Caco-2 (cell line): ENCODE measurements at regions of chr17 and their contacts with region 1.

Region 1: DNA sequence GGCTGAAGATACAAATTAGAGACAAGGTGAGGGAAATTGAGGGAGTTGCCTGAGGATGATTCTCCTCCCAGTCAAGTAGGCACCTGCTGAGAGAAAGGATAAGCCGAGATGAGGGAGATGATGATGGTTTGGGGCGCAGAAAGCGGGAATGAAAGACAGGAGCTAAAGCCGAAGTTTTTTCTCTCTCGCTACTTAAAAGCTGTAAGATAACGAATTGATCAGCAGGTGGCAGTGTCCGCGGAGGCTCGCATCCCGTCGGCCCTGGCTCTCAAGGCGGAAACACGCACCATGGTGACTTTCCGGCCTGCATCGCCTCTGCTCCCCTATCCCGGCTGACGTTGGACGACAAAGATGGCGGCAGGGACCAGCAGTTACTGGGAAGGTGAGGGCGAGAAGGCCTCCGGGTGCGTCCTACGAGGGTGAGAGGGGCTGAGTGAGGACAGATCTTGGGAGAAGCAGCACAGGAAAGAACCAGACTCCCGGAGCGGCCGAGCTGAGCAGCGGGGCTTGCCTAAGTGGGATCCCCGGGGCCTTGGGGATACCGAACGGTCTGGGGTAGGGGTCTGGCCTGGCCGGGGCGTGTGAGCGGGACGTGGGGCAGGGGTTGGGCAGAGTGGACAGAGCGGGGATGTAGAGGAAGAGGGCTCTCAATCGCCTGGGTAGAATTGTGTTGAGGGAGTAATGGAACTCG is at the start of gene GOSR1:
- DNase-seq: peak; percentile 94 to 95
- H3K4me3 ChIP-seq: peak within 1 kb of the TSS; percentile 96
- H3K4me3 Mint-ChIP-seq: peak within 1 kb of the TSS; percentile 91
- H3K27ac Mint-ChIP-seq: peak within 1 kb of the TSS; percentile 97
- H3K4me1 ChIP-seq: no peaks in the 10 kb centered on the region; the same call in 1 of the 2 replicates
- H3K4me1 Mint-ChIP-seq: peaks cover 13% of the 10 kb centered on the region
- H3K27me3 ChIP-seq: no peaks in the 10 kb centered on the region
- H3K27me3 Mint-ChIP-seq: no peaks in the 10 kb centered on the region
- CTCF ChIP-seq: peak; percentile 71 to 85
- total RNA-seq, gene GOSR1: 78.3 and 86.5 TPM in 2 replicates

Region 2: DNA sequence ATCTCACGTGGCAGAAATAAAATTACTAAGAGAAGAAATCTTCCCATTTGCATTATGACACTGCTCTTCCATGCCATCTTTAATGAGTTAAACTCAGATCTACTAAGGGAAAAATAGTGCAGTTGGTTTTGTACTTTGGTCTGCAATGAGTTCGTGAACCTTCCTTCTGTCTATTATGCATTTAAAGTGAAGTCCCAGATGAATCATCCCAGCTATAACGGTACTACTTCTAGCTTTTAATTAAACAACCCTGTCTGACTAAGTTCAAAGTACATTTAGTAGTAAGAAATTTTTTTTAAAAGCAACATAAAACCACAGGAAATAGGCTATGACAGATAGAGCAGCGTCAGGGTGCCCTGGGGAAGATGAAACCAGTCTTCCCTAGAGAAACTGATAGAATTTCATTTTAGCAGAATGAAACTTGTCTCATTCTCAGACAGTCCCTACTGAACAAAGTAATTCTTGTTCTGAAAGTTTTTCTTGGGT is 145.1 kb before region 1 on chr17:
- CTCF ChIA-PET with region 1: no interaction called
- POLR2A ChIA-PET with region 1: no interaction called
- intact Hi-C with region 1: no loop called
- DNase-seq: no peak
- H3K4me3 ChIP-seq: no peak overlapping the region
- H3K4me3 Mint-ChIP-seq: no peak overlapping the region
- H3K27ac Mint-ChIP-seq: no peak overlapping the region
- H3K4me1 ChIP-seq: peaks cover 37% of the 10 kb centered on the region
- H3K4me1 Mint-ChIP-seq: peaks cover 31% of the 10 kb centered on the region
- H3K27me3 ChIP-seq: no peaks in the 10 kb centered on the region
- H3K27me3 Mint-ChIP-seq: no peaks in the 10 kb centered on the region
- CTCF ChIP-seq: no peak

Region 3: GRCh38 chr17:30413109-30413508 is 64.1 kb before region 1 on chr17:
- CTCF ChIA-PET with region 1: no interaction called
- POLR2A ChIA-PET with region 1: no interaction called
- intact Hi-C with region 1: no loop called
- DNase-seq: no peak
- H3K4me3 ChIP-seq: no peak overlapping the region
- H3K4me3 Mint-ChIP-seq: no peak overlapping the region
- H3K27ac Mint-ChIP-seq: no peak overlapping the region
- H3K4me1 ChIP-seq: 0 out of 2 replicates have a peak, but pooled peaks cover 8% of the 10 kb centered on the region
- H3K4me1 Mint-ChIP-seq: peaks cover 35% of the 10 kb centered on the region
- H3K27me3 ChIP-seq: no peaks in the 10 kb centered on the region
- H3K27me3 Mint-ChIP-seq: no peaks in the 10 kb centered on the region
- CTCF ChIP-seq: no peak

Region 4: GRCh38 chr17:30450118-30451013 is 26.9 kb before region 1 on chr17:
- CTCF ChIA-PET with region 1: no interaction called
- POLR2A ChIA-PET with region 1: no interaction called
- intact Hi-C with region 1: loop called (anchors 1 kb)
- DNase-seq: peak; percentile 84 to 87
- H3K4me3 ChIP-seq: no peak overlapping the region
- H3K4me3 Mint-ChIP-seq: peak overlapping the region; percentile 59
- H3K27ac Mint-ChIP-seq: peak overlapping the region; percentile 95
- H3K4me1 ChIP-seq: peaks cover 21% of the 10 kb centered on the region
- H3K4me1 Mint-ChIP-seq: peaks cover 25% of the 10 kb centered on the region
- H3K27me3 ChIP-seq: no peaks in the 10 kb centered on the region
- H3K27me3 Mint-ChIP-seq: no peaks in the 10 kb centered on the region
- CTCF ChIP-seq: no peak

Region 5: DNA sequence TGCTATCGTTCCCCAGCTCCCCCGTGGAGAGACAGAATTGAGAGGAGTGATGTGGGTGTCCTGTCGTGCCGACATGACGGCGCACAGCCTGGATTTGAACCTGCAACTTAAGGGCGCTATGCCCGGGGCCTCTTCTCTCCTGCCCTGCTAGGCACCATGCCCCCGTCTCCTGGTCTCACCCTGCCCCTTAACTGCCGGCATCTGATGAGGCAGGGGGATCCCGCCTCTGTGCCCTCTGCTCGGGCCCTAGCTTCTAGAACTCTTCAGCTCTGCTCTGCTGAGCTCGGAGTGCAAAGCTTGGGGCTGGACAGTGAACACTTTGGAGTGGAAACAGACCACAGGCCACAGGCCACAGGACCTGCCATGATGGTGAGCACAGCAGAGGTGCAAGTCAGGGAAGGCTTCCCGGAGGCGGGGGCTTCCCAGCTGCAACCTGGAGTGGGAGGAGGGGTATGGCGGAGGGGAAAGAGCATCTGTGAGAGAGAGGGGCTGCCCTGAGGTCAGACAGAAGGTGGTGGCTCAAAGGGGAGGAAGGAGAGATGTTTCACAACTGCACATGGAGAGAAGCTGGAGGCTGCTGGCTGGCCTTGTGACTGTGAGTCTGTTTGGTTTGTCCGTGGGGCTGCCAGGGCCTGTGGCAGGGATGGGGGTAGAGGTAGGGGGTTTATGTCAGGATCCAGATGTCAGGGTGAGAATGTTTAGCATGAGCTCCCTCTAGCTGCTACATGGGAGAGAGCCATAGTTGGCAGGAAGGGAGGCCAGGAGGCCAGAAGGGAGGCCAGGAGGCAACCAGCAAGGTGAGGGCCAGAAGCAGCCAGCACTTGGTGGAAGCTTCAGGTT is 239.5 kb after region 1 on chr17:
- CTCF ChIA-PET with region 1: interaction called, 3 read pairs
- POLR2A ChIA-PET with region 1: no interaction called
- intact Hi-C with region 1: loop called (anchors 5 kb)
- DNase-seq: peak in 1 of 2 experiments; percentile 43
- H3K4me3 ChIP-seq: no peak overlapping the region
- H3K4me3 Mint-ChIP-seq: no peak overlapping the region
- H3K27ac Mint-ChIP-seq: no peak overlapping the region
- H3K4me1 ChIP-seq: no peaks in the 10 kb centered on the region
- H3K4me1 Mint-ChIP-seq: peaks cover 7% of the 10 kb centered on the region
- H3K27me3 ChIP-seq: no peaks in the 10 kb centered on the region
- H3K27me3 Mint-ChIP-seq: no peaks in the 10 kb centered on the region
- CTCF ChIP-seq: peak in 1 of 2 experiments; percentile 43

Region 6: DNA sequence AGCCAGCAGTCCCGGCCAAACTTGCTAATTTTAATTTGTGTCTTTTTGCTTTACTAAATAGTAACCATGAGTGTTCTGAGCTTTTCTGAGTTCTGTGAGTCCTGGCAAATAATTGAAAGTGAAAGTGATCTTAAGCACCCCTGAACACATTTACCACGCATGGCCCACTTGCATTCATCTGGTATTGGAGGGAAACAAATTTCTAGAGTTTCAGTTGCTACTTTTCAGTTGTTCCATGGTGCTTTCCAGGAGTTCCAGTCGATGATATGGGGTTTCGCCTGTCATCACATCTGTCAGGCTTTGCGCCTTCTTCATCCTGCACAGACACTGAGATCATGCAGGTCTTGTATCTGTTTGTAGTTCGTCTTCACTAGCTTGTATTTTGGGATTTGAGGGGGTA is 303.1 kb after region 1 on chr17:
- CTCF ChIA-PET with region 1: no interaction called
- POLR2A ChIA-PET with region 1: no interaction called
- intact Hi-C with region 1: no loop called
- DNase-seq: no peak
- H3K4me3 ChIP-seq: no peak overlapping the region
- H3K4me3 Mint-ChIP-seq: no peak overlapping the region
- H3K27ac Mint-ChIP-seq: no peak overlapping the region
- H3K4me1 ChIP-seq: no peaks in the 10 kb centered on the region
- H3K4me1 Mint-ChIP-seq: no peaks in the 10 kb centered on the region
- H3K27me3 ChIP-seq: no peaks in the 10 kb centered on the region
- H3K27me3 Mint-ChIP-seq: no peaks in the 10 kb centered on the region
- CTCF ChIP-seq: no peak